PC-9 (cell line): ENCODE measurements at regions of chr17 and their contacts with region 1.

Region 1: DNA sequence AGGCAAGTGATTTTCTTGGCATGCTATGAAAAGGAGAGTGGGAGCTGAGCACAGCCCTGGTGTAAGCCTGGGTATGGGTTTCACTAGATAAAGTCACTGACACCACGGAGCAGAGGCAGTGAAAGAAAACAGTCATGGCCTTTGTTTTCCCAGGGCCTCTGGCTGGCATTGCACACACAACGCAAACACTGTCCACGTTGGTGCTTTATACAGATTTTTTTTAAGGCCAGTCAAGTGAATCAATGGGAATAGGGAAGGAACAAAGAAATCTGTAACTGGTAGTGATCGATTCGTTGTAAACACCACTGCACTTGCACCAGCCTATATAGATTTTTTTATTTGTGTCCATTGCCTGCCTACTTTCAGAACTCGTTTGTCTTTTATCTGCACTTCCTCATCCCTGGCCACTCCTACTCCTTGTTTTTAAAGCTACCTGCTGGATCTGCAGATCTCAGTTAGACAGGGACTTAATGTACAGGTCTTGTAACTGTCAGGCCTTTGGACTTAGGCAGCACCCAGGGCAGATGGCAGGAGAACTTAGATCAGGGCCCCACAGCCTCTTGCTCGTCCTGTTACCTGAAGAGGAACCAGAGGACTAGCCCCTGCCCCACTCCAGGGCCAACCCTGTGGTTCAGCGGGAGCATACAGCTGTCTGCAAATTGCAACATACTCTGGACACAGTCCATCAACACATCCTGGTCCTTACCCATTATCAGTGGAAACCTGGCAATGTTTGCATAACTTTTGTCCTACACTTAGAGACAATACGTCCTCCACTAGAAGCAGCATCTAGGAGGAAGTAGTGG is 10.6 kb upstream of the TMIGD1 start:
- DNase-seq: peak; percentile 68 to 98
- H3K4me3 ChIP-seq: peak overlapping the region; percentile 33; the same call in 1 of the 2 replicates
- H3K27ac ChIP-seq: peak overlapping the region; percentile 96
- H3K4me1 ChIP-seq: peaks cover 64% of the 10 kb centered on the region
- H3K27me3 ChIP-seq: no peaks in the 10 kb centered on the region
- CTCF ChIP-seq: no peak

Region 2: GRCh38 chr17:30134551-30134950 is 209.9 kb before region 1 on chr17:
- CTCF ChIA-PET with region 1: no interaction called
- POLR2A ChIA-PET with region 1: no interaction called
- intact Hi-C with region 1: loop called (anchors 5 kb)
- DNase-seq: no peak
- H3K4me3 ChIP-seq: no peak overlapping the region
- H3K27ac ChIP-seq: no peak overlapping the region
- H3K4me1 ChIP-seq: no peaks in the 10 kb centered on the region
- H3K27me3 ChIP-seq: no peaks in the 10 kb centered on the region
- CTCF ChIP-seq: no peak

Region 3: GRCh38 chr17:30378824-30379302 is 34.4 kb after region 1 on chr17 and contains the start of gene CPD:
- CTCF ChIA-PET with region 1: no interaction called
- POLR2A ChIA-PET with region 1: no interaction called
- intact Hi-C with region 1: loop called (anchors 2 kb)
- DNase-seq: peak; percentile 81 to 96
- H3K4me3 ChIP-seq: peak within 1 kb of the TSS; percentile 84
- H3K27ac ChIP-seq: no peak within 1 kb of the TSS
- H3K4me1 ChIP-seq: peaks cover 73% of the 10 kb centered on the region
- H3K27me3 ChIP-seq: no peaks in the 10 kb centered on the region
- CTCF ChIP-seq: no peak
- total RNA-seq, gene CPD: 44.7 and 55.0 TPM in 2 replicates

Region 4: GRCh38 chr17:30554839-30555751 is 210.6 kb after region 1 on chr17:
- CTCF ChIA-PET with region 1: interaction called, 4 read pairs
- POLR2A ChIA-PET with region 1: no interaction called
- intact Hi-C with region 1: loop called (anchors 2 kb)
- DNase-seq: peak in 1 of 2 experiments; percentile 38
- H3K4me3 ChIP-seq: no peak overlapping the region
- H3K27ac ChIP-seq: no peak overlapping the region
- H3K4me1 ChIP-seq: peaks cover 14% of the 10 kb centered on the region
- H3K27me3 ChIP-seq: peaks cover 2% of the 10 kb centered on the region
- CTCF ChIP-seq: peak; percentile 50; the same call in 1 of the 2 replicates

Region 5: GRCh38 chr17:30716461-30717300 is 372.2 kb after region 1 on chr17:
- CTCF ChIA-PET with region 1: no interaction called
- POLR2A ChIA-PET with region 1: no interaction called
- intact Hi-C with region 1: loop called (anchors 5 kb)
- DNase-seq: no peak
- H3K4me3 ChIP-seq: no peak overlapping the region
- H3K27ac ChIP-seq: no peak overlapping the region
- H3K4me1 ChIP-seq: no peaks in the 10 kb centered on the region
- H3K27me3 ChIP-seq: no peaks in the 10 kb centered on the region
- CTCF ChIP-seq: no peak